ENCODE measurements at regions of chr22 and their contacts with region 1.

Region 1: GRCh38 chr22:40922484-40923303 is 28.5 kb upstream of the RBX1 start:
- DNase-seq: peak; percentile 49
- CTCF ChIP-seq: peak; percentile 53

Region 2: DNA sequence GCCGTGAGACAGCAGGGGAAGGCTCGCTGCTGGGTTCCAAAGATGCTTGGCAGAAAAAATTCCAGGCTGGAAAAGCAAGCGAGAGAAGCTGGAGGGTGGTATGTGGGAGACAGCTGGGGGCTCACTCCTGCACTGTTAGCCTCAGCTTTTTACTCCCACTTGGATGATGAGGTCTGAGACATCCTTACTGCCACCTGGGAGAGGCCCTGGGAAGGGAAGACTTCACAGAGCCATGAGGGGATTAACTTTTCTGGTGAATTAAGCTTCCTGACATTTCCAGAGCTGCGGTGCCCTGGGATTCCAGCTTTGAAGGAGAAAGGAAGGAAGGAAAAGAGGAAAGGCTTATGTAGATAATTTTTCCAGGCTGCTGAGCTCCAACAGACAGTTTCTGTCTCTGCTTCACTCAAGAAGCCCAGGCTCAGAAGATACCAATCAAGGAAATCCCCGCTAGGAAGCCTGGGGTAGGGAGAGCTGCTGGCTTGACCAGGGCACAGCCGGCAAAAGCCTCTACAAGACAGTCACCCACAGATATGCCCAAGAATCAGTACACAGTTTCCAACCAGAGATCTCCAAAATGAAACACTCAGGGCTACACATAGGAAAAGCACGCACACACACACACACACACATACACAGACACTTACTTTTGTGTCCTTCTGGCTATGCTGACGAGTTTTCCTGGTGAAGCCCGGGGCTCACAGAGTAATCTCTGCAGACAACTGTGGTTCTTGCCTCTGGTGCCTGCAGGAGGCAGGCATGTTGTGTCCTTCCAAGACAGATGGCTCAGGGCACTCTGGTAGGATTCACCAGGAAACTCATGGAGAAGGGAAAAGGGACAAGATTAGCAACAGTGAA is 242.5 kb before region 1 on chr22:
- CTCF ChIA-PET with region 1: interaction called, 15 read pairs
- POLR2A ChIA-PET with region 1: no interaction called
- DNase-seq: no peak
- CTCF ChIP-seq: no peak

Region 3: GRCh38 chr22:40877488-40877887 is 45.2 kb before region 1 on chr22:
- CTCF ChIA-PET with region 1: no interaction called
- POLR2A ChIA-PET with region 1: no interaction called
- DNase-seq: no peak
- CTCF ChIP-seq: no peak

Region 4: DNA sequence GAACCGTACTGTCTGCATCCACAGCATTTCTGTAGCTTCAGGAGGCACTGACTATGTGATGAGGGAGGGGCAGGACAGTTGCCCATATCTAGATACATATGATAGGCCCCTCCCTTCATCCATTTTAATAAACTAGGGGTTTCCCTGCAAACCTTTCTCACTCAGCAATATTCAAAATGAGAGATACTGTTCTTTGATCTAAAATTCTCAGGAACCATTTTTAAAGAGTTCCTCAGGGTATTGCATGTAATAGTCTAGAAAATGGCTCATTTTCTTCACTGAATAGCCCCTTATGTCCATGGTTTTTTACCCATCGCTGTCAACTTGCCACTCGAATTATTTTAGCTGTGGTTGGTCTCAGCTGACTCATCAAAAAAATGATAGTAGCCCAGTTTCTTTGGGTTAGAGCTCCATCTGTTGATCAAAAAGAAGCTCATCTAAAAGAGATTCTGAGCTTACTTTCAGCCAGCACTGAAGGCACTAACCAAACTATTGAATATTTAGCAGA is 23.8 kb before region 1 on chr22:
- CTCF ChIA-PET with region 1: interaction called, 12 read pairs
- POLR2A ChIA-PET with region 1: no interaction called
- DNase-seq: peak; percentile 69
- CTCF ChIP-seq: peak; percentile 49

Region 5: GRCh38 chr22:40939202-40939601 is 16.5 kb after region 1 on chr22:
- CTCF ChIA-PET with region 1: interaction called, 44 read pairs
- POLR2A ChIA-PET with region 1: no interaction called
- DNase-seq: no peak
- CTCF ChIP-seq: no peak

Region 6: GRCh38 chr22:40965936-40966725 is 43.4 kb after region 1 on chr22:
- CTCF ChIA-PET with region 1: interaction called, 10 read pairs
- POLR2A ChIA-PET with region 1: no interaction called
- DNase-seq: no peak
- CTCF ChIP-seq: no peak

Region 7: GRCh38 chr22:41123151-41123550 is 200.5 kb after region 1 on chr22:
- CTCF ChIA-PET with region 1: interaction called, 10 read pairs
- POLR2A ChIA-PET with region 1: no interaction called
- DNase-seq: no peak
- CTCF ChIP-seq: no peak

Region 8: DNA sequence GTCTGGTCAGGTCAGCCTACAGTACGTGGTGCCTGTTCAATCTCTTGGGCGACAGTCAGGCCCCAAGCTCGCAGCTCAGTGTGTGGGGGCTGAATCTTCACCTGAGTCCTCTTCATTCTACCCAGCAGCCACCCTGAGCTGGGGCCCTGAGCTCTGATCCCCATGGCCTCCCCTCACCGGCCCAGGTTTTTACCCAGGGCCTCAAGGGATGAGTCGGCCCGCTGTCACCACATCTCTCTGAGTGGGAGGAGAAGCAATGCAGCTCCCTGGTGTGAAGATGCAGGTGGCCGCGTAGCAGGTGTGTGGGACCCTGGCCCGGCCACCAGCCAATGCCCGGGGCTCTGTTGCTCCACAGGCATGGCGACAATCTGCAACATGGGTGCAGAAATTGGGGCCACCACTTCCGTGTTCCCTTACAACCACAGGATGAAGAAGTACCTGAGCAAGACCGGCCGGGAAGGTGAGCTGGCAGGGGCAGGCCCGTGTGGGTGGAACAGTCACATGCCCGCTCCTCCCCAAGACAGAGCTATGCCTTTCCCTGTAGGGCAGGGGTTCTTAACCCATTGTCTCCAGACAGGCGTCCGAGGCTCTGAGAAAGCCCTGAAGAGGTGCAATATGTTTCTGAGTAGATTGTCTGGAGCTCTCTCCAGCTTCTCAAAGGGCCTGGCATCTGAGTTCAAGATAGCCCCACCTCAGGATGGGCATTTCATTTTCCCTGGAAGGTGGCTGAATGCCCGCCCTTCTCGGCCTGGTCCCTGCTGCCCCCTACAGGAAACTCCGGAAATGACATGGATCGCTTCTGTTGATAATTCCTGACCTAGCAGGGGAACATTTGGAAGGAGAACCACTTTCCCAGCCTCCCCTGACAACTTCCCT is 594.7 kb after region 1 on chr22:
- CTCF ChIA-PET with region 1: interaction called, 19 read pairs
- POLR2A ChIA-PET with region 1: no interaction called
- DNase-seq: peak; percentile 68
- CTCF ChIP-seq: peak; percentile 73